ENCODE measurements at regions of chr10 and their contacts with region 1.

Region 1: DNA sequence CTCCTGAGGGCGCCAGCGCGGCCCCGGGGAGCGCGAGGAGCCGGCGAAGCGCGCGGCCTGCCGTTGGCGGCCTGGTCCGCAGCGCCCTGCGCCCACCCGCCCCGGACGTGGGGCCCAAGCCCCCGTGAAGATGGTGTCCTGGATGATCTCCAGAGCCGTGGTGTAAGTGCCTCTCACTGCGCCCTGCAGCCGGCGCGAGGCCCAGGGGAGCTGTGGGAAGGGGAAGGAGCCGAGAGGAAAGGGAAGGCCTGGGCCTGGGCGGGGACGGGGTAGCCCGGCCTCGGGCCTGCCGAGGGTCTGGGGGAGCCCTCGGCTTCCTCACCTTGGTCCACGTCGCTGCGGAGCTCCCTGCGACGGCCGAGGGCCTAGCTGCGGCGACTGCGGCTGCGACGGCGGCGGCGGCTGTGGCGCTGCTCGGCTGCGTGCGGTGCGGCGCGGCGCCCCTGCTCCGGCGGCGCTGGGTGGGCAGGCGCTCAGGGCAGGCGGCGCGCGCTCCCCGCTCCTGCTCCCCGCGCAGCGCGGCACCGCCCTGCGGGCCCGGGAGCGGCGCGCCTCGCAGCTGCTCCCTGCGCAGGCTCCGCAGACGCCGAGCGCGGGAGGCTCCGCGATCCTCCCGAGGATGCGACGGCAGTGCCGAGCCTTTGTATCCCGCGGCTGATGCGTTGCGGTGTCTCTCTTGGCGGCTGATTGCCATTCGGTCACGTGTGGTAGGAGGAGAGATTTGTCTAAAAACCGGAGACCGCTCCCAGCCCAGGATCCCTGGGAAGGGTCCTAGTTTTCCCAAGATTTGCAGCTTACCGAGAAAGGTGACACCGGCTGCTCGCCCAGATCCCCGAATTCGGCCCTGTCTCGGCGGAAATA is 445 bp downstream of the REEP3 start:
- DNase-seq: peak in 1 of 2 donors; percentile 76
- H3K4me3 ChIP-seq: peak overlapping the region; percentile 81 to 90
- H3K27ac ChIP-seq: peak overlapping the region; percentile 97
- H3K4me1 ChIP-seq: peaks cover 0 to 23% of the 10 kb centered on the region in 2 donors
- H3K27me3 ChIP-seq: no peaks in the 10 kb centered on the region
- CTCF ChIP-seq: no peak

Region 2: DNA sequence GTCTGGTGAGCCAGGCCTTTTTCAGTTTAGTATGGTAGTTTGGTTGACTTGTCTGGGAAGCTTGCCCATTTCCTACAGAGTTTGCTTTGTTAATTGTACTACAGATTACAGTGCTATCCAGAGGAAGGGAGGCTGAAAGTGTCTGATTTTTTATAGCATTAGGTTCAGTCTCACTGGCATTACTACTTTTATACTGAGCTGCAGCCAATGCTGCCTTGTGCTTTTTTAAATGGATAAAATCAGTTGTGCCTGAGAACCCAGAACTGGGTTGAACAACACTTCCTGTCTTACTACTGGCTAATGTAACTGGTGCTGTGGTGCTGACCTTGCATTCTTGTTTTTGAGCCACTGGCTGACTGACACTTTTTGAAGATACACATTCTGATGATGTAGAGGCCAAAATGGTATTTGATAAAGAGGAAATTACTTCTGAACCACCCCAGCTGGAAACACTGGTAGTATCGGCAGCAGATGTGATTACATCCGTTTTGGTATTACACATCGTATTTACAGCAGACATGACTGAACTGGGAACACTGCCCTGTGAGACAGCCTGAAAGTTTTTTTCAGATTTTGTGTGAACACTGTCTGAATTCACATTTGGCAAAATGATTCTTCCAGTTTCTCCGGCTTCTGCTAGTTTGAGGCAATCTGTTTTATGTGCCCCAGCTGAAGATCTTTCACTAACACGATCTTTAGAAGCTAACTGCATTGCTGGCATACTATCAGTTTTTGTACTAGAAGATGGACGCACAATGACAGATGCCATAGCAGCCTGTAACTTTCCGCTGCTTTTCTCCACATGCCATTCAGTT is 314.4 kb before region 1 on chr10:
- intact Hi-C with region 1: loop called (anchors 5 kb)
- DNase-seq: no peak
- H3K4me3 ChIP-seq: peak overlapping the region; percentile 14 to 35
- H3K27ac ChIP-seq: peak overlapping the region; percentile 28 to 60
- H3K4me1 ChIP-seq: peaks cover 5 to 27% of the 10 kb centered on the region in 2 donors
- H3K27me3 ChIP-seq: no peaks in the 10 kb centered on the region
- CTCF ChIP-seq: no peak

Region 3: DNA sequence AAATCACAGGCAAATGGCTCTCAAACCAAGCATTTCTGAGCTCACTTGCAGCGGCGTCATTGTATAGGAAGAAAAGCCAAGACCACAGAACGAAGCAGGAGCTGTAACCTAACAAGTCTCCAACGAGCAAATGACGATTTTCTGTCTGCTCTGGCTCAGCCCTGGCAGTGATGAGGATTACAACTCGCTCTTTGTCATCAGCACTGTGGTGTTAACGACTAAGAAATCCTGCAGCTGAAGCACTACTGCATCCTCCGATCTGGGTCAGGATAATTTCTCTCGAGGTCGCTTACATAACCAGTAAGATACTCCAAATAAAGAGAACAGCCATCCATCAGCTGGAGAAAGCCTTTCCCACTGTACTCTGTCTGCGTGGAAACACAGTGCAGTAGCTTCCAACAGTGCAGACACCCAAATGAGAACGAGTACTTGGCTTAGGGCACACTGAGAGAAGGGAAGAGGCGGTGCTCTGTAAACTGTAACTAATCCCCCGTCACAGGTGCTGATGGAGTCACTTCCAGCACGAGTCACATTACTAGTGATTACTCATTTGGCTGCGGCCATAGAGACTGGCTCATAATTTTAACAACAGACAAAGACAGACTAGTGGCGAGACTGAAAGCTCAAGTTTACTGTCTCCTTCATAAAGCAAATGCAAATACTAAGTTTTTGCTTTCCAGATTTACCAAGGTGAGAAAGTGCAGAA is 252.7 kb before region 1 on chr10:
- intact Hi-C with region 1: loop called (anchors 2 kb)
- DNase-seq: peak; percentile 81 to 95
- H3K4me3 ChIP-seq: peak overlapping the region; percentile 55 to 64
- H3K27ac ChIP-seq: peak overlapping the region; percentile 76 to 84
- H3K4me1 ChIP-seq: no peaks in the 10 kb centered on the region
- H3K27me3 ChIP-seq: no peaks in the 10 kb centered on the region
- CTCF ChIP-seq: peak; percentile 20 to 54 (median 45)

Region 4: DNA sequence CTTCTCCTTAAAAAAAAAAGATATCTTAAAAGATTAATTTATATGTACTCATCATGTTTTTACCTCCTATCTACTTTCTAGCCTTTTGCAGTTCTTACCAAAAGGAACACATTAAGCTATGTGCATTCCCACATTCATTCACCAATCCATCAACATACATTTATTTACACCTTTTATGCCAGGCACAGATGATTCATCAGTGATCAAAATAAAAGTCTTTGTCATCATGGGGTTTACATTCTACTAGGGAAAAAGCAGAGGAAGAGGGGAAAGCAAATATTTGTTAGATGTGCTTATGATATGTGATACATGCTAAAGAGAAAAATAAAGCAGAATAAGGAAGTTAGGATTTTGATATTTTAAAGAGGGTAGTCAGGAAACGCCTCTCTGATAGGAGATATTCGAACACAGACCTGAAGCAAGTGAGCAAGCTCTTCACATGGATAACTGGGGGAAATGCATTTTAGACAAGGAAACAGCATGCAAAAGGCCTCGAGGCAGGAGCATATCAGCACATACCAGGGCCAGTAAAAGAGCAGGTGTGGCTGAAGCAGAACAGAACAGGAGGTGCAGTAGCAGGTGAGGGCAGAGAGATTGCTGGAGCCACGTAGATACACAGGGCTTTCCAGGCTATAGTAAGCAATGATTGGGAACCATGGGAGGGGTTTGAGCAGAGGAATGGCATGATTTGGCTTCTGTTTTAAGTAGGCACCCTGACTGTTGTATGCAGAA is 67.0 kb after region 1 on chr10:
- intact Hi-C with region 1: loop called (anchors 5 kb)
- DNase-seq: no peak
- H3K4me3 ChIP-seq: no peak overlapping the region
- H3K27ac ChIP-seq: no peak overlapping the region
- H3K4me1 ChIP-seq: peaks cover 0 to 44% of the 10 kb centered on the region in 2 donors
- H3K27me3 ChIP-seq: no peaks in the 10 kb centered on the region
- CTCF ChIP-seq: no peak

Region 5: DNA sequence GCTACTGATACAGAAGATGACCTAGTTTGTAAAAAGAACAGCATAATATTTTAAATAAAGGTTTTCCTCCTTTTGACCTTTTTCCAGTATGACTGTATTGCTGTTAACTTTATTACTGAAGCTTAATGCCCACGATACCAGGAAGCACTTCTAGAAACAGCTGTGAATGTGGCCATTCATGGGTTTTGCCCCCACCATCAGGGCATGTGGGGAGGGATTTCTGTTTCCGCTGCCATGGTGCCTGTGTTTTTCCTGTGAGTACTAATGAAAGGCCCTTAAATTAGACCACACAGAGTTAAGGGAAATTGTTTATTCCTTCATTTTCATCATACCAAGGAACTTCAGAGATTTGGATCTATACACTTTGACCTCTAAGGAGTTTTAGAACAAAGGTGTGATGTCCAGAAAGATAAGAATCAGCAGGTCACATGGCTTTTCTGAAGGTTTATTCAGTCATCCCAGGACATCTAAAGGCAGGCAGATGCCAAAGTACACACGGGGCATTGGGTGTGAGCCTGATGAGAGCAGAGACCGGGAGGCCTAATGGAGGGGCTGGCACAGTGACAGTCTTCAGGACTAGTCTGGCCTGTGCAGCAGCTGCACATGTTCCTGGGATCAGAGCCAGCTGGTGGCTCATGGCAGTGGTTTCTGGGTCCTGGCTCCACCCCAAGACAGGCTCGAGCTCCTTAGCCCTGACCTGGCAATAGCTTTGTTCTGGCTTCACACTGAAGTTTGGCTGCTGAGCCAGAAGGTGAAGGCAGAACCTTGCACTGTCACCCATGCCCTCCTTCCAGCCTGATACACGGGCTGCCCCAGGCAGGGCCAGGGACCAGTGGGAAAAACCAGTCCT is 190.4 kb after region 1 on chr10:
- intact Hi-C with region 1: loop called (anchors 5 kb)
- DNase-seq: peak; percentile 89 to 98
- H3K4me3 ChIP-seq: peak overlapping the region in 1 of 2 donors; percentile 2
- H3K27ac ChIP-seq: peak overlapping the region; percentile 89 to 91
- H3K4me1 ChIP-seq: peaks cover 8 to 42% of the 10 kb centered on the region in 2 donors
- H3K27me3 ChIP-seq: no peaks in the 10 kb centered on the region
- CTCF ChIP-seq: no peak

Measured in ascending aorta (tissue), 2 donors.